ENCODE measurements at regions of chr13 and their contacts with region 1.

Region 1: GRCh38 chr13:30802953-30803478 is 67.7 kb downstream of the ALOX5AP start:
- DNase-seq: peak; percentile 87
- ATAC-seq: peak; percentile 99
- H3K4me3 ChIP-seq: peak overlapping the region in 3 of 5 experiments; percentile 18 to 37 (median 21)
- H3K4me3 Mint-ChIP-seq: peak overlapping the region; percentile 80
- H3K27ac ChIP-seq: no peak overlapping the region
- H3K27ac Mint-ChIP-seq: no peak overlapping the region
- H3K4me1 ChIP-seq: peaks cover 8 to 9% of the 10 kb centered on the region in 2 donors
- H3K4me1 Mint-ChIP-seq: peaks cover 11% of the 10 kb centered on the region
- H3K27me3 ChIP-seq: peaks cover 0 to 8% (median 0%) of the 10 kb centered on the region in 4 experiments
- H3K27me3 Mint-ChIP-seq: no peaks in the 10 kb centered on the region
- CTCF ChIP-seq: peak; percentile 98

Region 2: DNA sequence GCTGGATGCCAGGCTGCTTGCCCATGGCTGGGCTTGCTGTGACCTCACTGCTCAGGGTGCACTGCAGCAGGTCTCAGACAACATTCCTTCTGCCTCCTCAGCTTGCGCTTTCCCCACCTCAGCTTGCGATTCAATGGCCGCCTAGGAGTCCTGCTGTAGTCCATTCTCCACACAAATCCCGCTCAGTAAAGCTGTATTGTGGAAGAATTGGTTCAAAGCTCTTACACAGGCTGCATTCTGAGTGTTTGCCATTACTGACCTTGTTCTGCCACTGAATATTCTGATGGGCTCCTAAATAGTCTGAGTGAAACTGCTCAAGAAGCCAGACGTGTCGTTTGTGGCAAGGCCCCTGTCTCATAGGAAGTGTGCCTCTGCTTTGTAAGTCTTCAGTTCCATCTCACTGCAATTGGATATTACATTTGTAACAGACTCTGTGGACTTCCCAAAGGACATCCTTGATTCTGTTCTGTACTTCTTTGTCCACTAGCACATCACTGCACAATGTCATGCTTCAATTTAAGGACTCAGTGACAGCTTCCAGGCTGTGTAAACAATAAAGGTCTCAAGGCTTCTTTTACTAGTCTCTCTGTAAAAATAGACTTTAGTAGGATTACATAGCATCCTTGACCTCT is 545.4 kb before region 1 on chr13:
- CTCF ChIA-PET with region 1: interaction called, 3 read pairs
- POLR2A ChIA-PET with region 1: no interaction called
- intact Hi-C with region 1: loop called (anchors 5 kb)
- DNase-seq: no peak
- ATAC-seq: no peak
- H3K4me3 ChIP-seq: no peak overlapping the region
- H3K4me3 Mint-ChIP-seq: no peak overlapping the region
- H3K27ac ChIP-seq: no peak overlapping the region
- H3K27ac Mint-ChIP-seq: peak overlapping the region; percentile 21
- H3K4me1 ChIP-seq: peaks cover 5 to 6% of the 10 kb centered on the region in 2 donors
- H3K4me1 Mint-ChIP-seq: peaks cover 13% of the 10 kb centered on the region
- H3K27me3 ChIP-seq: no peaks in the 10 kb centered on the region
- H3K27me3 Mint-ChIP-seq: no peaks in the 10 kb centered on the region
- CTCF ChIP-seq: no peak

Region 3: GRCh38 chr13:30581582-30581981 is 221.4 kb before region 1 on chr13:
- CTCF ChIA-PET with region 1: interaction called, 6 read pairs
- POLR2A ChIA-PET with region 1: no interaction called
- intact Hi-C with region 1: loop called (anchors 5 kb)
- DNase-seq: peak; percentile 40
- ATAC-seq: no peak
- H3K4me3 ChIP-seq: no peak overlapping the region
- H3K4me3 Mint-ChIP-seq: no peak overlapping the region
- H3K27ac ChIP-seq: no peak overlapping the region
- H3K27ac Mint-ChIP-seq: no peak overlapping the region
- H3K4me1 ChIP-seq: no peaks in the 10 kb centered on the region
- H3K4me1 Mint-ChIP-seq: peaks cover 9% of the 10 kb centered on the region
- H3K27me3 ChIP-seq: peaks cover 0 to 3% (median 0%) of the 10 kb centered on the region in 4 experiments
- H3K27me3 Mint-ChIP-seq: no peaks in the 10 kb centered on the region
- CTCF ChIP-seq: no peak

Region 4: GRCh38 chr13:30639671-30640070 is 163.3 kb before region 1 on chr13:
- CTCF ChIA-PET with region 1: interaction called, 4 read pairs
- POLR2A ChIA-PET with region 1: no interaction called
- intact Hi-C with region 1: loop called (anchors 10 kb)
- DNase-seq: no peak
- ATAC-seq: no peak
- H3K4me3 ChIP-seq: no peak overlapping the region
- H3K4me3 Mint-ChIP-seq: no peak overlapping the region
- H3K27ac ChIP-seq: no peak overlapping the region
- H3K27ac Mint-ChIP-seq: no peak overlapping the region
- H3K4me1 ChIP-seq: peaks cover 0 to 13% of the 10 kb centered on the region in 2 donors
- H3K4me1 Mint-ChIP-seq: peaks cover 28% of the 10 kb centered on the region
- H3K27me3 ChIP-seq: no peaks in the 10 kb centered on the region
- H3K27me3 Mint-ChIP-seq: no peaks in the 10 kb centered on the region
- CTCF ChIP-seq: no peak

Region 5: DNA sequence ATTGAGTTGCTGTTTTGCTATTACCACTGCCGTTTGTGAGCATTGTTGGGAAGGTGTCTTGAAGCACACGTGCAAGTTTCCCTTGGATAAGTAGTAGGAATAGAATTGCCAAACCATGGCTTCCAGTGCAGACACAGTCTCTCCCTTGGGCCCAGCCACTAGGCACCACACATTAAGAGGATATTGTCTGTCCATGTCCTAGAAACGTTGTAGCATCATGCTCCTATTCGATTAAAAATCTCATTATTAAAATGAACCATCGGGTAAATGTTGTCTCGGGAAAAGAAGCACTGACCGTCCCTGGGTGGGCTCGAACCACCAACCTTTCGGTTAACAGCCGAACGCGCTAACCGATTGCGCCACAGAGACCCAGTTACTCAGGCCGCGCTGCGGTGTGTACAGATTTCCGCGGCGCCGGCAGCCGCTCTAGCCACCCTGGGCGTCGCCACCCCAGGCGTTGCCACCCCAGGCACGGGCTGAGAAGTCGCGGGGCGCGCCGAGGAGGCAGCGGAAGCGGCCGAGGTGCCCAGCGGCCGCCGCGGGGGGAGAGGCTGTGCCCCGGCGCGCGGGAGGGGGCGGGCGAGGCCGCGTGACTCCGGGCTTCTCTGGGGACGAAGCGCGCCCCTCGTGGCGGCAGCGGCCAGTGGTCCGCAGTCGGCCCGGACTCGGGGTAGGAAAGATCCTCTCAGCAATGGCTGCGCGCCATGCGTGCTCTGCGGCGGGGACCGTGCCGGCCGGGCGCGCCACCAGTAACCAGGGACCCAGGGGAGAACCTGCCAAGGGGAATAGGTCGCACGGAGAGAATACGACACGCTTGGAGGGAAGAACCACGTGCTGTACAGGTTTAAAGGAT is 129.1 kb before region 1 on chr13:
- CTCF ChIA-PET with region 1: interaction called, 27 read pairs
- POLR2A ChIA-PET with region 1: no interaction called
- intact Hi-C with region 1: loop called (anchors 1 kb)
- DNase-seq: peak; percentile 97
- ATAC-seq: peak; percentile 92
- H3K4me3 ChIP-seq: peak overlapping the region; percentile 52 to 73 (median 65)
- H3K4me3 Mint-ChIP-seq: peak overlapping the region; percentile 97
- H3K27ac ChIP-seq: peak overlapping the region; percentile 47 to 57
- H3K27ac Mint-ChIP-seq: peak overlapping the region; percentile 99
- H3K4me1 ChIP-seq: peaks cover 8 to 19% of the 10 kb centered on the region in 2 donors
- H3K4me1 Mint-ChIP-seq: peaks cover 30% of the 10 kb centered on the region
- H3K27me3 ChIP-seq: no peaks in the 10 kb centered on the region
- H3K27me3 Mint-ChIP-seq: no peaks in the 10 kb centered on the region
- CTCF ChIP-seq: peak; percentile 73

Region 6: DNA sequence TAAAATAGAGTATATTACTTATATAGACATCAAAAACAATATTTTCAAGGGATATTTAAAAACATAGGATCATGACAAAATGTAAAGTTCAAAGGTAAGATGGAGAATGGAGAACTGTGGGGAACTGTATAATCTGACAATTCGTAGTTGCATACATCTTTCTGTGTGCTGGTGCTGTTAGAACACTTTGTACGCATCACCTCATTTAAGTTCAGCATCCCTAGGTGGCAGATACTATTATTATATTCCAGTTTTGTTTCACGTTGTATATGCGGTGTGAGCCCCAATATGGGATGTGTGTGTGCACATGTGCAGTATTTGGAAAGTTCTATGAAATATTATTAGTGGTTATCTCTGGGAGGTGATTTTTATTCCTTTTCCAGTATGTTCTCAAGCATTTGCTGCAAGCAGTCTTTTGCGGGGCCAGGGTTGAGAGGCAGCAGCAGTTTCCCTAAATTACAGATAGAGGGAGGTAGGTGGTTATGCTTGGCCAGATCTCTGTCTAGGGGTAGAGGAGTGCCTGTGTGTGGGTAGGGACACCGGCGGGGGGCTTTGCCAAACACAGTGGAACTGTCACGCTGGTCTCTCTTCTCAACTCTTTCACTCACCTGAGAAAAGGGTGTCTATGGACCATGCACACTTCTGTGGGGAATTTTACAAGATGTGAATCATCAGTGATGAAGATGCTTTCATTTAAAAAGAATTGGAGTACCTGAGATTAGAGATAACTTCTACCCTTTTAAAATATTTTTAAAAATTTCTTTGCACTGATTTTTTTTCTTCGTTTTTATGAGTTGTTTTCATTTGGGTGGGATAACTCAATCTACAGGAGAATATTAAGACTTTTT is 123.3 kb before region 1 on chr13:
- CTCF ChIA-PET with region 1: interaction called, 27 read pairs
- POLR2A ChIA-PET with region 1: no interaction called
- intact Hi-C with region 1: loop called (anchors 1 kb)
- DNase-seq: peak; percentile 66
- ATAC-seq: peak; percentile 91
- H3K4me3 ChIP-seq: no peak overlapping the region
- H3K4me3 Mint-ChIP-seq: no peak overlapping the region
- H3K27ac ChIP-seq: no peak overlapping the region
- H3K27ac Mint-ChIP-seq: peak overlapping the region; percentile 54
- H3K4me1 ChIP-seq: peaks cover 3 to 13% of the 10 kb centered on the region in 2 donors
- H3K4me1 Mint-ChIP-seq: peaks cover 12% of the 10 kb centered on the region
- H3K27me3 ChIP-seq: no peaks in the 10 kb centered on the region
- H3K27me3 Mint-ChIP-seq: no peaks in the 10 kb centered on the region
- CTCF ChIP-seq: peak; percentile 72

Region 7: GRCh38 chr13:30880856-30881155 is 77.8 kb after region 1 on chr13:
- CTCF ChIA-PET with region 1: no interaction called
- POLR2A ChIA-PET with region 1: no interaction called
- intact Hi-C with region 1: no loop called
- DNase-seq: no peak
- ATAC-seq: no peak
- H3K4me3 ChIP-seq: no peak overlapping the region
- H3K4me3 Mint-ChIP-seq: no peak overlapping the region
- H3K27ac ChIP-seq: no peak overlapping the region
- H3K27ac Mint-ChIP-seq: no peak overlapping the region
- H3K4me1 ChIP-seq: no peaks in the 10 kb centered on the region
- H3K4me1 Mint-ChIP-seq: no peaks in the 10 kb centered on the region
- H3K27me3 ChIP-seq: peaks cover 0 to 8% (median 2%) of the 10 kb centered on the region in 4 experiments
- H3K27me3 Mint-ChIP-seq: peaks cover 20% of the 10 kb centered on the region
- CTCF ChIP-seq: no peak